Activated CD8-positive, alpha-beta T cell treated with anti-CD3 and anti-CD28 coated beads for 36 hours (primary cell): ENCODE measurements at regions of chr7 and their contacts with region 1.

Region 1: DNA sequence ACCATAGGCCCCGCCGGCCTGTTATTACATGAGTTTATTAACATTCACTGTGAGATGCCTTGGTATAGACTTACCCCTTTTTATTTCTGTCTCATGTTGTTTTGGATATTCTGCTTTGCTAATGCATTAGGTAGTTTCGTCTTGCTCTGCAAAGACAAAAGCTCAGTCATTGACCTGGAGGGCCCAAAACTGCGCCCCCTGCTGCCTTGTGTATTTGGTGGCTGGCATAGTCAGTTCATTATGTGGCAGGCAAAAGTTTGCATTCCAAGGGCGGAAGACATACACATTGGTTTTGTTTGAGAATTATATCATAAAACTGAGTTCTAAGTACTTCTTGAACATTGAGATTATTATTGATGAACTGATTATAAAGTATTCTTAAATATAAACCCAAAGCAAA is 372.5 kb downstream of the SDK1 start:
- DNase-seq: peak; percentile 75
- ATAC-seq: no peak
- H3K4me3 Mint-ChIP-seq: no peak overlapping the region
- H3K27ac Mint-ChIP-seq: no peak overlapping the region
- H3K4me1 Mint-ChIP-seq: no peaks in the 10 kb centered on the region
- H3K27me3 Mint-ChIP-seq: no peaks in the 10 kb centered on the region
- CTCF ChIP-seq: peak; percentile 54

Region 2: GRCh38 chr7:3300651-3301378 is 372.7 kb before region 1 on chr7 and contains the start of gene SDK1:
- CTCF ChIA-PET with region 1: interaction called, 19 read pairs
- POLR2A ChIA-PET with region 1: no interaction called
- intact Hi-C with region 1: loop called (anchors 5 kb)
- DNase-seq: peak; percentile 91
- ATAC-seq: peak; percentile 93
- H3K4me3 Mint-ChIP-seq: peak within 1 kb of the TSS; percentile 66
- H3K27ac Mint-ChIP-seq: no peak within 1 kb of the TSS
- H3K4me1 Mint-ChIP-seq: peaks cover 5% of the 10 kb centered on the region
- H3K27me3 Mint-ChIP-seq: peaks cover 30% of the 10 kb centered on the region
- CTCF ChIP-seq: peak; percentile 85
- total RNA-seq, gene SDK1: 0.25 to 0.78 TPM

Region 3: DNA sequence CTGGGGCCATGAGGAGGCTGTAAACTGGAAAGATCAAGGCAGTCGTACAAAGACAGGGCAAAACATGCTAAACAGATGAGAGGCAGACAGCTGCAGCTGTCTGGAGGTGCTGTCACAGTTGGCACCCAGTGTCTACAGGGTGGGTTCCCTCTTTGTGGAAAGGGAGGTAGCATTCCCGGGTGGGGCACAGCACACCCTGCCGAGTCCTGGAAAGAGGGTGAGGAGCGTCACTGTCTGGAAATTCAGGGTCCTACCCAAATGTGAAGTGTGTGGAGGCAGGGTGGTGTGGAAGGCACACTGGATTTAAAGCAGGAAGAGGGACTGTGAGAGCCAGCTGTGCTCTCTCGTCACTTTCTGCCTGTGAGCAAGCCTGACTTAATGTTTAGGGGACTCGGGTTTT is 16.3 kb before region 1 on chr7:
- CTCF ChIA-PET with region 1: interaction called, 10 read pairs
- POLR2A ChIA-PET with region 1: no interaction called
- intact Hi-C with region 1: no loop called
- DNase-seq: no peak
- ATAC-seq: no peak
- H3K4me3 Mint-ChIP-seq: no peak overlapping the region
- H3K27ac Mint-ChIP-seq: no peak overlapping the region
- H3K4me1 Mint-ChIP-seq: no peaks in the 10 kb centered on the region
- H3K27me3 Mint-ChIP-seq: peaks cover 2% of the 10 kb centered on the region
- CTCF ChIP-seq: no peak

Region 4: DNA sequence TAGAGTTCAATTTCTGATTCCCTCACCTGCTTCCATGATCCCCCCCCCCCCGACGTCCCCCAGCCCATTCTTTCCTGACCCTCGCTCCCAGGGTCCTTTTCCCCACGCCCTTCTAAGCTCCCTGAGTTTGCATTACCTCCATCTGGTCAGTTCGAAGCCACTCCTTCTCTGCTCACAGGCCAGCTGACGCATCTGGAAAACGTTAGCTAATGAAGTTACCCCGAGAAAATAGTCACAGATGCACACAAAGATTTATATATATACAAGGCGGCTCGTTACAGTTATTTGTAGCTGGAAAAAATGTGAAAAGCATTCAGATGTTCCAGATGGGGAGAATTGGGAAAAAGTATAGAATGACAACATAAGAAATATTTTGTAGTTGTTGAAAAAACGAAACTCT is 378.6 kb after region 1 on chr7:
- CTCF ChIA-PET with region 1: no interaction called
- POLR2A ChIA-PET with region 1: no interaction called
- intact Hi-C with region 1: no loop called
- DNase-seq: no peak
- ATAC-seq: no peak
- H3K4me3 Mint-ChIP-seq: no peak overlapping the region
- H3K27ac Mint-ChIP-seq: no peak overlapping the region
- H3K4me1 Mint-ChIP-seq: no peaks in the 10 kb centered on the region
- H3K27me3 Mint-ChIP-seq: peaks cover 6% of the 10 kb centered on the region
- CTCF ChIP-seq: no peak